ENCODE measurements at regions of chr11 and their contacts with region 1.

Region 1: DNA sequence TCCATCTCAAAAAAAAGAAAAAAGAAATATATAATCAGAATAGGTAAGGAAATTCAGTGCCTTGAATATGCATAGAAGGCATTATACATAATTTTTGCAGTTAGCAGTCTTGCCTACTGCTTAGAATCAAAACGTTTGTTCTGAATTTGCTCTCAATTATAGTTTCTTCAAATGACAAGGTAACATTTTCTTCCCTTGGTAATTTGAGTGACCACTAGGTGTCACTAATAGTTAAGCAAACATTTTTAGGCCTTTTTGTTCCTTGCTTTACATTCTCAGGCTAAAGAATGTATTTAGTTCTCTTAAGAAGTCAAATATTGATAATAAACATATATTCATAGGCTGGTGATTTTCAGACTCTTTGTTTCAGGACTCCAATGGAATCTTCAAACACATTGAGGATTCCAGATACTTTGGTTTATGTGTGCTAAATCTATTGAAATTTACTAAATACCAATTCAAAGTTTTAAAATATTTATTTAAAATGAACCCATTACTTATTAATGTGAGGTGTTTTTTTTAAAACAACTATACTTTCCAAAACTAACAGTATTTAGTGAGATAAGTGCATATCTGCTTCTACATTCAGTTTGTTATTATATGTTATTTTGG is 55.0 kb upstream of the DEPDC7 start:
- DNase-seq: no peak
- ATAC-seq: no peak
- H3K4me3 ChIP-seq: no peak overlapping the region
- H3K27ac ChIP-seq: no peak overlapping the region
- H3K4me1 ChIP-seq: no peaks in the 10 kb centered on the region
- H3K27me3 ChIP-seq: no peaks in the 10 kb centered on the region

Region 2: GRCh38 chr11:33065445-33066178 is 105.0 kb after region 1 on chr11:
- intact Hi-C with region 1: loop called in 3 of 4 experiments (anchors 5 kb)
- DNase-seq: peak; percentile 46 to 85 (median 81)
- ATAC-seq: peak; percentile 76 to 87
- H3K4me3 ChIP-seq: no peak overlapping the region
- H3K27ac ChIP-seq: no peak overlapping the region
- H3K4me1 ChIP-seq: peaks cover 1% of the 10 kb centered on the region
- H3K27me3 ChIP-seq: no peaks in the 10 kb centered on the region

Measured in right cardiac atrium (tissue), 5 donors.